ENCODE measurements at regions of chrX and their contacts with region 1.

Region 1: GRCh38 chrX:107716816-107717700 is 58.5 kb downstream of the TSC22D3 start:
- DNase-seq: peak; percentile 64
- ATAC-seq: peak; percentile 71
- H3K4me3 ChIP-seq: peak overlapping the region; percentile 81
- H3K27ac ChIP-seq: peak overlapping the region; percentile 86
- H3K4me1 ChIP-seq: peaks cover 17% of the 10 kb centered on the region
- H3K27me3 ChIP-seq: no peaks in the 10 kb centered on the region; a peak in 1 of 4 replicates
- CTCF ChIP-seq: no peak
- EP300 ChIP-seq: peak; percentile 56 to 73; a peak in 2 of 4 replicates
- POLR2A ChIP-seq: peak; percentile 98
- RAD21 ChIP-seq: no peak

Region 2: DNA sequence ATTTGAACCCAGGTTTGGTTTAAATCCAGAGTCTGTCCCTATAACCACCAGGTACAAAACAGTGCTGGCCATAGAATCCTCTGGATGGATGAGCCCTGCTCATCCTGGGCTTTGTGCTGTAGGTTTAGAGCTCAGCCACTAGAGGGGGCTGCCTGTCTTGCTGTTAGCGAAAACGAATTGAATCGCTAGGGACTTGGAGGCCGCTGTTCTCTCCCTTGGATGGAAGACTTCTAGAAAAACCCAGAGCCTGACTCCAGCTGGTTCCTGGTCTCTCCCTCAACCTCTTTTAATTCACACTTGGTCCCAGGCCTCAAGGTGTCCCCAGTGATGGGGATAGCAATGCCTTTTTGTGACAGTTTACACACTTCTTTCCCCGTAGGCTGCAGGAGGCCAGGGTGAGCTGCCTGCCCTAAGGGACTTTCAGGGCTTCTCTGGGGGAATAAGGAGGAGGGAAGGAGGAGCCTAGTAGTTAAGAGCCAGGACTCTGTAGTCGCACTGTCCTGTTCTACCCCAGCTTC is 822.6 kb before region 1 on chrX:
- CTCF ChIA-PET with region 1: no interaction called
- POLR2A ChIA-PET with region 1: no interaction called
- RAD21 ChIA-PET with region 1: no interaction called
- SMC1A ChIA-PET with region 1: no interaction called
- in situ Hi-C with region 1: no loop called
- intact Hi-C with region 1: loop called (anchors 5 kb)
- DNase-seq: no peak
- ATAC-seq: peak; percentile 79
- H3K4me3 ChIP-seq: no peak overlapping the region
- H3K27ac ChIP-seq: no peak overlapping the region
- H3K4me1 ChIP-seq: no peaks in the 10 kb centered on the region
- H3K27me3 ChIP-seq: no peaks in the 10 kb centered on the region; a peak in 1 of 4 replicates
- CTCF ChIP-seq: peak; percentile 79 to 85 (median 83)
- EP300 ChIP-seq: no peak
- POLR2A ChIP-seq: no peak
- RAD21 ChIP-seq: peak; percentile 63

Region 3: GRCh38 chrX:107654872-107655761 is 61.9 kb before region 1 on chrX:
- CTCF ChIA-PET with region 1: interaction called, 25 read pairs
- POLR2A ChIA-PET with region 1: no interaction called
- RAD21 ChIA-PET with region 1: interaction called, 3 read pairs
- SMC1A ChIA-PET with region 1: interaction called, 27 read pairs
- in situ Hi-C with region 1: no loop called
- intact Hi-C with region 1: loop called (anchors 1 kb)
- DNase-seq: no peak
- ATAC-seq: peak; percentile 96
- H3K4me3 ChIP-seq: no peak overlapping the region
- H3K27ac ChIP-seq: no peak overlapping the region
- H3K4me1 ChIP-seq: no peaks in the 10 kb centered on the region
- H3K27me3 ChIP-seq: no peaks in the 10 kb centered on the region
- CTCF ChIP-seq: peak; percentile 61 to 90 (median 80)
- EP300 ChIP-seq: no peak
- POLR2A ChIP-seq: peak; percentile 49; the same call in 1 of the 2 replicates
- RAD21 ChIP-seq: peak; percentile 40

Region 4: GRCh38 chrX:107684956-107685385 is 32.1 kb before region 1 on chrX:
- CTCF ChIA-PET with region 1: interaction called, 4 read pairs
- POLR2A ChIA-PET with region 1: interaction called, 287 read pairs
- RAD21 ChIA-PET with region 1: interaction called, 444 read pairs
- SMC1A ChIA-PET with region 1: interaction called, 425 read pairs
- in situ Hi-C with region 1: no loop called
- intact Hi-C with region 1: no loop called
- DNase-seq: no peak
- ATAC-seq: peak; percentile 92
- H3K4me3 ChIP-seq: no peak overlapping the region
- H3K27ac ChIP-seq: 0 out of 2 replicates have a peak overlapping the region, but pooled peaks have one; percentile 27
- H3K4me1 ChIP-seq: peaks cover 18% of the 10 kb centered on the region
- H3K27me3 ChIP-seq: no peaks in the 10 kb centered on the region
- CTCF ChIP-seq: no peak
- EP300 ChIP-seq: no peak
- POLR2A ChIP-seq: no peak
- RAD21 ChIP-seq: no peak

Region 5: GRCh38 chrX:107731831-107732502 is 14.9 kb after region 1 on chrX:
- CTCF ChIA-PET with region 1: interaction called, 25 read pairs
- POLR2A ChIA-PET with region 1: interaction called, 10 read pairs
- RAD21 ChIA-PET with region 1: interaction called, 42 read pairs
- SMC1A ChIA-PET with region 1: interaction called, 11 read pairs
- in situ Hi-C with region 1: no loop called
- intact Hi-C with region 1: no loop called
- DNase-seq: no peak
- ATAC-seq: no peak
- H3K4me3 ChIP-seq: no peak overlapping the region
- H3K27ac ChIP-seq: no peak overlapping the region
- H3K4me1 ChIP-seq: no peaks in the 10 kb centered on the region
- H3K27me3 ChIP-seq: no peaks in the 10 kb centered on the region
- CTCF ChIP-seq: no peak
- EP300 ChIP-seq: no peak
- POLR2A ChIP-seq: no peak
- RAD21 ChIP-seq: no peak

Region 6: GRCh38 chrX:107760304-107761077 is 43.4 kb after region 1 on chrX:
- CTCF ChIA-PET with region 1: interaction called, 8 read pairs
- POLR2A ChIA-PET with region 1: interaction called, 4 read pairs
- RAD21 ChIA-PET with region 1: interaction called, 5 read pairs
- SMC1A ChIA-PET with region 1: interaction called, 6 read pairs
- in situ Hi-C with region 1: no loop called
- intact Hi-C with region 1: loop called (anchors 5 kb)
- DNase-seq: peak; percentile 32
- ATAC-seq: peak; percentile 46
- H3K4me3 ChIP-seq: no peak overlapping the region
- H3K27ac ChIP-seq: no peak overlapping the region
- H3K4me1 ChIP-seq: no peaks in the 10 kb centered on the region
- H3K27me3 ChIP-seq: no peaks in the 10 kb centered on the region
- CTCF ChIP-seq: no peak
- EP300 ChIP-seq: no peak
- POLR2A ChIP-seq: no peak
- RAD21 ChIP-seq: no peak

Region 7: DNA sequence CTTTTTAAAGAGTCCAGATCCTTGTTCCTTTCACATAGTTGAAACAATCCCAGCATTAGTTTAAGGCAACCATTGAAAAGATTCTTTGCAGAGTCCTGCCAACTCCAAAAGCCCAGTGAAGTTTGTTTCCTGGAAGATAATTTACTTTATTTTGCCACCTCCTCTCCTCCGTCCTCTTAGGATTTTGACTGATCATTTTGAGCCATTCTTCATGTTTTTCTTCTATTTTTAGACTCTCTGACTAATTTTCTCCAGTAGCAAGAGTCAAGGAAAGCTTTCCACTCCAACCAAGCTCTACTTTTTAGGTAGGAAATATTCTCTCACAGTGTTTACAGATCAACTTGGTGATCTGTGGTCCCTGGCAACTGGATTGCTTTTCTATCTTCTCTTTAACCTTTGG is 70.8 kb after region 1 on chrX:
- CTCF ChIA-PET with region 1: no interaction called
- POLR2A ChIA-PET with region 1: no interaction called
- RAD21 ChIA-PET with region 1: no interaction called
- SMC1A ChIA-PET with region 1: no interaction called
- in situ Hi-C with region 1: no loop called
- intact Hi-C with region 1: no loop called
- DNase-seq: no peak
- ATAC-seq: no peak
- H3K4me3 ChIP-seq: no peak overlapping the region
- H3K27ac ChIP-seq: no peak overlapping the region
- H3K4me1 ChIP-seq: no peaks in the 10 kb centered on the region
- H3K27me3 ChIP-seq: no peaks in the 10 kb centered on the region; a peak in 1 of 4 replicates
- CTCF ChIP-seq: no peak
- EP300 ChIP-seq: no peak
- POLR2A ChIP-seq: no peak
- RAD21 ChIP-seq: no peak

Region 8: GRCh38 chrX:107804427-107804826 is 87.4 kb after region 1 on chrX:
- CTCF ChIA-PET with region 1: no interaction called
- POLR2A ChIA-PET with region 1: no interaction called
- RAD21 ChIA-PET with region 1: no interaction called
- SMC1A ChIA-PET with region 1: no interaction called
- in situ Hi-C with region 1: no loop called
- intact Hi-C with region 1: no loop called
- DNase-seq: no peak
- ATAC-seq: no peak
- H3K4me3 ChIP-seq: no peak overlapping the region
- H3K27ac ChIP-seq: no peak overlapping the region
- H3K4me1 ChIP-seq: no peaks in the 10 kb centered on the region
- H3K27me3 ChIP-seq: no peaks in the 10 kb centered on the region
- CTCF ChIP-seq: no peak
- EP300 ChIP-seq: no peak
- POLR2A ChIP-seq: no peak
- RAD21 ChIP-seq: no peak